ENCODE measurements at regions of chr1 and their contacts with region 1.

Region 1: DNA sequence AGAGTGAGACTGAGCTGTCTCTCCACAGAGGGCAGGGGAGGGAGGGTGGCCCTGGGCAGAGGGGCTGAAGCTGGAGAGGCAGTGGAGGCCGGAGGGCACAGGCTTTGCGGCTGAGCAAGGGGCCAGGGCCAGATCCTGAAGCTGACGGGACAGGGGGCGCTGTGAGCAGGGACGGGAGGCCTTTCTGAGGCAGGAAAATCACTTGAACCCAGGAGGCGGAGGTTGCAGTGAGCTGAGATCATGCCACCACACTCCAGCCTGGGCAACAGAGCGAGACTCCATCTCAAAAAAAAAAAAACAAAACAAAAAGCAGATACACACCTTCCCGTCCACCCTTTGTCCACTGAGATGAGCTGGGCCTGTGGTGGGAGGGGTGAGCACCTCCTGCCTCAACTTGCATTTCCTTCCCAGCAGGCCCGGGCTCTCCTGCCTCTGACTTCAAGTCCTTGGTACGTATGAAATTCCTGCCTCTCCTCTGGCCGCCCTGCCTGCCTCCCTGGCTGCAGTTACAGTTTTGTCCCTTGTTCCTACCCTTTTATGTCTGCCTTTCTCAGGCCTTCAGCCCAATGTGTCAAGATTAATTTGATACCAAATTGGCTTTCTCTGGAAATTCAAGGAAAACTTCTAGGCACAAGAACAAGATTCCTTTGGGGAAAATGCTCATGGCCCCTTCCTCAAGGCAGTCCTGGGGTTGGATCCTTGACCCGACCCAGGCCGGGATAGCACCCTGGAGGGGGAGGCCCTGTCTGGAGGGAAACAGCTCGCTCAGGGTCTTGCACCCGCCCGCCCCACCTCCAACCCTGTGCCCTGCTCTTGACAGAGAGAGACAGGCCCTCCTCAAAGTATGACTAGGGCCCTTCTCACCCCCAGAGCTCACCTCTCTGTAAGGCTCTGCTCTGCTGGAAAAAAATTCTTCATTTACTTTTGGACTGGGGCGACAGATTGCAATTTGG is 11.2 kb upstream of the ADAMTSL4 start:
- DNase-seq: no peak
- H3K4me3 ChIP-seq: no peak overlapping the region
- CTCF ChIP-seq: no peak

Region 2: GRCh38 chr1:150420560-150421265 is 117.3 kb before region 1 on chr1:
- CTCF ChIA-PET with region 1: no interaction called
- POLR2A ChIA-PET with region 1: no interaction called
- DNase-seq: no peak
- H3K4me3 ChIP-seq: no peak overlapping the region
- CTCF ChIP-seq: no peak

Region 3: GRCh38 chr1:150498342-150498741 is 39.7 kb before region 1 on chr1:
- CTCF ChIA-PET with region 1: no interaction called
- POLR2A ChIA-PET with region 1: no interaction called
- DNase-seq: no peak
- H3K4me3 ChIP-seq: no peak overlapping the region
- CTCF ChIP-seq: no peak

Region 4: DNA sequence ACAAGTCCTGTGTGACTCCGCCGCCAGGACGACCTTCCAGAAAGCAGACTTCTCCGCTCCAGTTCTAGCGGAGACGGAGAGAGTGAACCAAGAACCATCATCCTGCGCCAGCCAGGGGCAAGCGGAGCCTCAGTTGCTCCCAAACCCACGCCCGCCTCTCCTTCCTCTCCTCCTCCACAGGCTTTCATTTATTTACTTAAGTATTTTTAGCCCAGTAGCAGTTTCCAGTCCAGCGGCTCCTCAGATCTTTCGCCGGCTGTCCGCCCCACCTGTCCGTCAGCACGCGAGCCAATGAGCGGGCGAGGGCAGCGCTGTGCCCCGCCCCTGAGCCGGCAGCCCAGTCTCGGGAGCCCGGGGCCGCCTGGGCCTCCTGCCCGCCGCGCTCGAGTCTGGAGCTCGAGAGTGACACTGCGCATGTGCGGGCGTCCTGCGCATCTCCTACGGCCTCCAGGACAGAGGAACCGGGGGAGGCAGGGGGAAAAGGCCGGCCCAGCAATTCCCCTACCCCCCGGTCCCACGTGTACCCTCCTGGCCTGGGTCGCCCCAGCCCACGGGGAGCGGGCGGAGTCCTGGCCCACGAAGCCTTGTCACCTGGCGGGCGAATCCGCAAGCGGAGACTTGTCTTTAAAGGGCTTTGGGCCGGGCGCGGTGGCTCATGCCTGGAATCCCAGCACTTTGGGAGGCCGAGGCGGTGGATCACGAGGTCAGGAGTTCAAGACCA is 22.5 kb before region 1 on chr1 and contains the start of gene FALEC:
- CTCF ChIA-PET with region 1: interaction called, 160 read pairs
- POLR2A ChIA-PET with region 1: interaction called, 3 read pairs
- DNase-seq: peak; percentile 56
- H3K4me3 ChIP-seq: peak within 1 kb of the TSS; percentile 69
- CTCF ChIP-seq: no peak

Region 5: DNA sequence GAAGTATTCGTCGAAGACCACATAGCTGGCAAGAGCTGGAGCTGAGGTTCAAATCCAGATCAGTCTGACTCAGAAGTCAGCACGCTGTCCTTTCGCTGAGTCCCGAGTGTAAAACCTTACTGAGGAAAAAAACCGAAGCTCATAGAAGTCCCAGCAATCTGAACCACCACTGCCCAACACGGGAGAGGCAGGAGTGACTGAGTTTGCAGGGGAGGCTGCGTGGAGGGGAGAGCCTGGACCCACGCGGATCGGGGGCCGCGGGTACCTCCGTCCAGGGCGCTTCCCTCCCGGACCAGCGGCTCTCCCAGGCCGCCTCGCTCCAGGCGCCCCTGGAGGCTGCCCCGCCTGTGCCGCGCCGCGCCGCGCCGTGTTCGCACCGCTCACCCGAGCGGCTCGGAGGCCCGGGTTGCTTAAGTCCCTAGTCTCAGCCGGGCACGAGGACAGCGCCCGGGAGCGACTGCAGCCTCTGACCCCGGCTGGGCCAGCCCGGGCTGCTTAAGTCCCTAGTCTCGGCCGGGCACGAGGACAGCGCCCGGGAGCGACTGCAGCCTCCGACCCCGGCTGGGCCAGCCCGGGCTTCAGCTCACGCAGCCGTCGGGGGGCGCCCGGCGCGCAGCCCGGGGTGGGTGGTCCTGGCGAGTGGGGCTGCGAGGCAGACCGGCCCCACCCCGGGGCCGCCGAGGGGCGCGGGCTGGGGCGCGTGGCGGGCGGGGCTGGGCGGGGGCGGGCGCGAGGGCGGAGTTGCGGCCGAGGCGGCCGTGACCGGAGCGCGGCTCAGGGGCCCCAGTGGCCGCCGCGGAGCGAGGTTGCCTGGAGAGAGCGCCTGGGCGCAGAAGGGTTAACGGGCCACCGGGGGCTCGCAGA is 10.9 kb after region 1 on chr1 and contains the start of gene ADAMTSL4:
- CTCF ChIA-PET with region 1: interaction called, 133 read pairs
- POLR2A ChIA-PET with region 1: interaction called, 3 read pairs
- DNase-seq: no peak
- H3K4me3 ChIP-seq: peak within 1 kb of the TSS; percentile 60
- CTCF ChIP-seq: no peak